ENCODE measurements at regions of chr5 and their contacts with region 1.

Region 1: GRCh38 chr5:174418928-174419796 is 305.2 kb upstream of the MSX2 start:
- DNase-seq: peak; percentile 68
- H3K4me3 ChIP-seq: peak overlapping the region; percentile 47
- CTCF ChIP-seq: peak; percentile 95

Region 2: GRCh38 chr5:173963867-173964441 is 455.2 kb before region 1 on chr5:
- CTCF ChIA-PET with region 1: no interaction called
- POLR2A ChIA-PET with region 1: no interaction called
- DNase-seq: no peak
- H3K4me3 ChIP-seq: no peak overlapping the region
- CTCF ChIP-seq: no peak

Region 3: DNA sequence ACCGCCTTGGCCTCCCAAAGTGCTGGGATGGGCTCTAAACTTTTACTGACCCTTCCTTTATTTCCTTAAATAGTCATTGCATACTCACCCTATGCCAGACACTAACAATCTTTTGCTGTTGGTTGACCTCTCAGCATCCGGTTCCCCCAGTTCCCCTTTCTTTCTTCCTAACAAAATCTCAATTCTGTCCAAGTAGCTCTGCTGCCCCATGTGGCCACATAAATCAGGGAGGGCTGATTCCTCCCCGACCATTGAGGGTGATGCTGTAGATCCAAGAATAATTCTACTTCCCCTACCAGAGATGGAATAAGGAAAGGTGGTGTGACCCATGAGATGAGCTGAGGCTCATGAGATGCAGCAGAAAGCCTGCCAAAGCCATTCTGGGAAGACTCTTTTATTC is 10.1 kb before region 1 on chr5:
- CTCF ChIA-PET with region 1: interaction called, 21 read pairs
- POLR2A ChIA-PET with region 1: no interaction called
- DNase-seq: no peak
- H3K4me3 ChIP-seq: no peak overlapping the region
- CTCF ChIP-seq: no peak

Region 4: DNA sequence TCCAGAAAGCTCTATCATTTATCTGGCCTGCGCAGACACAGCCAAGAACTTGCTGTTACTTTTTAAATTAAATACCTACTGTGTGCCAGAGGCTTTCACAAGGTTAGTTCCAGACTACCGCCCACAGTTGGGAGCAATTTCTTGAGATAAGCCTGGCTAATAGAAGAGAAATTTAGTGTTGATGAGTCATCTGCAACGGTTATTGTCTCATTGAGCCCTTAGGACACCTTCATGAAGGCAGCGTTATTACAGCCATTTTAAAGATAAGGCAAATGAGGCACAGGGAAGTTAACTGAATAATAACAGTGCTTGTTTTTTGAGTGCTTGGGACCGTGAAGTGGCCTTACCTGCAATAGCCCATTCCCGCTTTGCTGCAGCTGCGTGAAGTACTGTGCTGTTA is 12.3 kb after region 1 on chr5:
- CTCF ChIA-PET with region 1: interaction called, 35 read pairs
- POLR2A ChIA-PET with region 1: no interaction called
- DNase-seq: no peak
- H3K4me3 ChIP-seq: no peak overlapping the region
- CTCF ChIP-seq: no peak

Region 5: GRCh38 chr5:174751154-174752000 is 332.2 kb after region 1 on chr5:
- CTCF ChIA-PET with region 1: interaction called, 37 read pairs
- POLR2A ChIA-PET with region 1: no interaction called
- DNase-seq: no peak
- H3K4me3 ChIP-seq: peak overlapping the region; percentile 49
- CTCF ChIP-seq: no peak

Region 6: DNA sequence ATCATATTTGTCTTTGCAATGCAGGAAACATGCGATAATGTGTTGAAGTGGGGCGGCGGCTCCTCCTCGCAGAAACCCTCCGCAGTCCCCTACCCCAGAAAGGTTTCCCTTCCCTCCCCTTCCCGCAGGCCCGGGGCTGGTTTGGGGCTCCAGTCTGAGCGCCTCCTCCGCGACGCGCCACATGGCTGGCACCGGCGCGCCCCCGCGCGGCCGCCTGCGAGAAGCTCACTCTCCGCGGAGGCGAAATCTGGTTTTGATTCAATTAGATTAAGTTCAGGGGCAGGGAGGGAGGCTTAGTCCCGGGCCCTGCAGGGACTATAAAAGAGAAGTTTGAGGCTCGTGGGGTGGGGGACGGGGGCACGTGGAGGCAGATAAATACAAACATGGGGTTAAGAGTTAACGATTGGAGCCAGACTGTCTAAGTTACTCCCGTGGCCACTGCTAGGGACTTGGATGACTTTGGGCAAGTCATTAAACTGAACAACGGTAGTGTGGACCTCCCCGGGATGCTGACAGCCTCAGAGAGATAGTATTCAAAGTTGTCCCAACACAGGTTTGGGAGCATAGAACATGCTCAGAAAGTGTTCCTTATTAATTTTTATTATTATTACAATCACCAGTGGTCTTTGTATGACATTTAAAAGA is 374.6 kb after region 1 on chr5:
- CTCF ChIA-PET with region 1: interaction called, 133 read pairs
- POLR2A ChIA-PET with region 1: no interaction called
- DNase-seq: no peak
- H3K4me3 ChIP-seq: no peak overlapping the region
- CTCF ChIP-seq: peak; percentile 94

Region 7: DNA sequence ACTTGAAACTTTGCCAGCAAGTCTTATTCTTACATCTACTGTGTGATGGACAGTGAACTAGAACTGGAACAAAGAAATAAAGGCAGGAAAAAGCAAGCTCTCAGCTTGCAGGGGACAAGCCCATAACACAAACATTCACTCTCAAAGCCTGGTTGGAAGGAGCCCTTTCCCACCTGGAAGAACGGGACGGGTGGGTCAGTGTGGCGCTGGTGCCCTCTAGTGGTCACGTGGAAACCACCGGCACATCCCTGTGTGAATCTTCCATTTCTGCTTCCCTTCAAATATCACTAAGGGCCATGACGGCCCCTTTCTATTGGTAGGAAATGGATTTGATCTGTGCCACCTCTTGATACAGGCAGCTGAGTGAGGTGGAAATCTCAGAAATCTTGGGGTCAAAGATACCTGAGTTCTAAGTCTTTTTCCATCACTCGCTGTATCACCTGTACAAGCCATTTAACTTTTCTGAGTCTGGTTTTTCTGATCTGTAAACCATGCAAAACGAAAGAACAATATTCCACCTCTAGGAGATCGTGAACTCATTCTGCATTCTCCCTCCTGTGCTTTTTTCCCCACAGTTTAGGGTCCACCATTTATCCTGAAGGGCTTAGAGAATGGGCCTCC is 516.8 kb after region 1 on chr5:
- CTCF ChIA-PET with region 1: interaction called, 31 read pairs
- POLR2A ChIA-PET with region 1: no interaction called
- DNase-seq: no peak
- H3K4me3 ChIP-seq: no peak overlapping the region
- CTCF ChIP-seq: peak; percentile 91

Region 8: DNA sequence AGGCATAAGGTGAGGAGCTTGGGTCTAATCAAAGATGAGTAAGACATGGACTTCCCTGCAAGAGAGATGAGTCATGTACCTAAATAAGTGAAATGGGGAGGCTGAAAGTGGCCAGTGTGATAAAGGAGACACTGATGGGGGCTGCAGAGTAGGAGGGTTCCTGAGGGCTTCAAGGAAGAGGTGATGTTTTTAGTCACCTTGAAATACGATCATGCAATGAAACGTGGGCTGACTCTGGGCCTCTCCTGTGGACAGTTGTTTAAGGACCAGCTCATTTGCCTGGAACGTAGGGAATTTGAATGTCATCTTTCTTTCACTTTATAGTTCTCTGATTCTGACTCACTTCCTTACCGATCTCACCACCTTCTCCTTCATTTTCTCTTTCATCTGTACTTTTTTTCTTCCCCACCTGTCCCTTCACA is 1402.6 kb after region 1 on chr5:
- CTCF ChIA-PET with region 1: no interaction called
- POLR2A ChIA-PET with region 1: no interaction called
- DNase-seq: no peak
- H3K4me3 ChIP-seq: no peak overlapping the region
- CTCF ChIP-seq: no peak